Posterior cingulate gyrus (tissue), 11 donors: ENCODE measurements at regions of chr11 and their contacts with region 1.

Region 1: DNA sequence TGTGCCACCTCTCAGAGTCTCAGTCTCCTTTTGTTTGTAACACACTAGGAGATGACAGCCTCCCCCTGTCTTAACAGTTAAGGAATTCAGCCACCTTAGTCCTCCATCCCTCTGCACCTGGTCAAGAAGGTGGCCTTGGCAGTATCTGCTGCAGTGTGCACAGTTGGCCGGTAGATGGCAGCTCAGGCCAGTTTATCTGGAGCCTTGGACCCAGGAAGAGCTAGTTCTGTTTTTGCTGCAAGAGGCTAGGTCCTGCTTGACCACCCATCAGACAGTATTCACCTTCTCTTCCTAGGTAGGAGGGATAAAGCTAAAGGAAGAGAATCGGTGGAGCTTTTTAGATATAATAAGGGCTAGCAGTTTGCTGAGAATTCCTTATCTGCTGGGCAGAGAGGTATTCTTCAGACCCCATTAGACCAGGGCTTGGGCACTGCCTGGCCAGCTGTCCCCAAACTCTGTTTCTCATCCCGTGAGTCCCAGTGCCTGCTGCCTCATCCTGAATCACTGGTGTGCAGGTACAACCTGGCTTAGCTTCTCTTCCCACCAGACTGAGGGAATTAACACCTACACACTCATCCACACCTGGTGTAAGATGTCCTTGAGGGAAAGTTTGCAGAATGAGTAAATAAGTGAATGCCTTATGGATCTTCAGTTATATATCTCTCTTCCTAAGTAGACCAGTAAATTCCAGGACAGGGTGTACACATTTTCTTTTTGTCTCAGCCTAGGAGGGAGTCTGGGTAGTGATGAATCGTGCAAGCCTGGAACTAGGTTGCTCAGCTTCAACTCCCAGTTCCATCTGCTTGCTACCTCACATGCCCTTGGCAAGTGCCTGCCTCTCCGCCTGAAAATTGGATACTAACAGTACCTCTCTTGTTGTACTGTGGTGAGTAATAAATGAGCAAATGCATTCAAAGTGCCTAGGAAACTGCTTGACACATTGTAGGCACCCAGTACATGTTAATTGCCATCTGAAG is 70.8 kb upstream of the NARS2 start:
- DNase-seq: peak; percentile 61 to 97 (median 82)

Region 2: DNA sequence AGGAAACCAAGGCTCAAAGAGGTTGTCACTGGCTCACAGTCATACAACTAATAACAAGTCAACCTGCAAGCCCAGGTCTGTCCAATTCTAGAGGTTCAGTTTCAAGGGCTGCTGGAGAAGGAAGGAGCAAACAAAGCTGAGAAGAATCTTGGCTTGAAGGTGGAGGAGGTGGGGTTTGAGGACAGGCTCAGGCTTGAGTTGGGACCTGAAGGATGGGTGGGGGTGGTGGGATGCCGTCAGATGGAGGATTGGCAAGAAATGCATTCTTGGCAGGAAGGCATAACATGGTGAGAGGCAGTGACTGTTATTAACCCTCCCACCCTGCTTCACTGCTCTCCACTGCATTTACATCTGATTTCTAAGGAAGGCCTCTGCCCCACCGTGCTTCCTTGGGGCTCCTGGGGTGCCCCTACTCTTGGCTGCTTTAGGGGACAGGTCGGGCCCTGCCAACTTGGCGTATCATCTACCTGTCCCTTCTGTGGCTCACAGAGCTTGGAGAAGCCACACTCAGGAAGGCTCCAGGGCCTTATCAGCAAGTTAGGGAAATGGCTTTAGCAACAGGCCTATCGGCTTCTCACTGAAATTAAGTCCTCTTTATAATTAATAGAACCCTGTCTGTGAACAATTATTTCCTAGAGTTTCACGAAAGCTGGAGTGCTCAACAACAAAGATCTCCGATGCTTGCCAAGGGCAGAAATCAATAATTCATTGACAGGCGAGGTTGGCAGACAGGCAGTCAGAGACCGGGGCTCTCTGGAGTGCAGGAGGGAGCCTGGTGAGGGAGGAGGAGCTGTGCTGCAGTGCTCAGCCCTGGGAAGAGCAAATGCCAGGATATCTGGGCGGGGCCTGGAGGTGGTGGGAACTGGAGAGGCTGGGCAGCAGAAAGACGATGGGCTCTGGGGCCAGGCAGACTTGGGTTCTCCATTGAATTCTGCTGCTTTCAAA is 14.1 kb after region 1 on chr11:
- intact Hi-C with region 1: no loop called
- DNase-seq: peak in 1 of 10 donors; percentile 78

Region 3: DNA sequence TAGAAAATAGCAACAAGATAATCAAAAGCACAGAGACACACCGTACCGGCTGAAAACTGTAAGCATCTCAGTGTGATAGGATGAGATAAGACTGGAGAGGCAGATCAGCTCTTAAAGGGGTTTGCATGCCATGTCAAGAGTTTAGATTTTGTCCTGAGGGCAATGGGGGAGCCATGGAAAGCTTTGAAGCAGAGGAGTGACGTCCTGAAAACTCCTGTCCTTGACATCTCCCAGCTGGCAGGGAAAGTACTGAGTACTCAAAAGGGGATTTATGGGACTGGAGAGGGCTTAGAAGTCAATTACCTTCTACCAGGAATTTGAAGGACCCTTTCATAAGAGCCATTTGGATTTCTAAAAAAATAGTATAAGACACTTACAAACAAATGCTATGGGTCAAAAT is 349.7 kb after region 1 on chr11:
- intact Hi-C with region 1: no loop called
- DNase-seq: no peak

Region 4: DNA sequence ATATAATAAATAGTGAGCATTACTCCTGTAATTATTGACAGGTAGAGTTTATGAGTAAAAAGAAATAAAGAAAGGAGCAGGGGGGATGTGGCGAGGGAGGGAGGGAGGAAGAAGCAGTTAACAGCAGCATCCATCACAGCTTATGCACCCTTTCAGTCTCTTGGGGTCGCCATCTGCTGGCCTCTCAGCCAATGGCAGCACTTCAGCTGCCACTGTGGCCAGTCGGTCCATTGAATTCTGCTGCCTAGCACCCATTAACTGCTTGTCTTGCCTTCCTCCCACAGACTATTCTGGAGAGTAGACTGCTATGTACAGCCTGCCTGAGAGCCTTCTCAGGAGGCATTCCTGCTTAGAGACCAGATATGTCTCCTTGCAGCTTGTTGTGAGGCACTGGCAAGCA is 407.0 kb after region 1 on chr11:
- intact Hi-C with region 1: loop called (anchors 10 kb)
- DNase-seq: peak in 3 of 10 donors; percentile 23 to 40 (median 37)

Region 5: DNA sequence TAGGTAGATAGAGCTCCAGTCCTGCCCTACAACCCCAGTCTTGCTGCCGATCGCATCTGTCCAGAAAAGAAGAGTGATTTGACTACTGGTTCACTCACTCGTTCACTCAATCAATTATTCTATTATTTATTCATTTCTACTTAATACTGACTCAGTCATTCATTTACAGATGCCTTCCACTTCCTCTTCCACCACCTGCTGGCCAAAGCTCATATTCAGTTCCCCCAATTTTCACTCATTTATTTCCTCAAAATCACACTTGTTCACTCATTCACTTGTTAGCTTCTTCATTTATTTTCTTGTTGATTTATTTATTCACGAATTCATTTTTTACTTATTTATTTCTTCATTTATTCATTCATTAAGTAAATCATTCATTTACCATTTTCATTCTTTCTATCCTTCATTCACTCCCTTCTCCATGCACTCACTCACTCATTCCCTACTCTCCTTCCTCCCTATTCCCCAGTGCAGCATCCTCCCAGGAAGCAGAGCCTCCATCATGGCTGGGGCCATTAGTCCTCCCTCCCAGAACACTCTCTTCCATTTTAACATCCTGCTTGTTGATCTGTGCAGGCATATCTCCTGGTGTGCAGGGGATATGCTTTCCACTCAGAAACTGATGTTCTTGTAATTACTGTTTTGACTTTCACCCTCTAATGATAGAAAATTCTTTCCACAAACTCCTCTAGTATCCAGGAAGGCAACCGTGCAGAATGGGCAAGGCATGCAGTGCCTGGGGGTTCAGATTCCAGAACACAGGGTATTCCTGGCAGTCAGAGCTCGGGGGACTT is 514.3 kb after region 1 on chr11:
- intact Hi-C with region 1: loop called (anchors 5 kb)
- DNase-seq: no peak

Region 6: DNA sequence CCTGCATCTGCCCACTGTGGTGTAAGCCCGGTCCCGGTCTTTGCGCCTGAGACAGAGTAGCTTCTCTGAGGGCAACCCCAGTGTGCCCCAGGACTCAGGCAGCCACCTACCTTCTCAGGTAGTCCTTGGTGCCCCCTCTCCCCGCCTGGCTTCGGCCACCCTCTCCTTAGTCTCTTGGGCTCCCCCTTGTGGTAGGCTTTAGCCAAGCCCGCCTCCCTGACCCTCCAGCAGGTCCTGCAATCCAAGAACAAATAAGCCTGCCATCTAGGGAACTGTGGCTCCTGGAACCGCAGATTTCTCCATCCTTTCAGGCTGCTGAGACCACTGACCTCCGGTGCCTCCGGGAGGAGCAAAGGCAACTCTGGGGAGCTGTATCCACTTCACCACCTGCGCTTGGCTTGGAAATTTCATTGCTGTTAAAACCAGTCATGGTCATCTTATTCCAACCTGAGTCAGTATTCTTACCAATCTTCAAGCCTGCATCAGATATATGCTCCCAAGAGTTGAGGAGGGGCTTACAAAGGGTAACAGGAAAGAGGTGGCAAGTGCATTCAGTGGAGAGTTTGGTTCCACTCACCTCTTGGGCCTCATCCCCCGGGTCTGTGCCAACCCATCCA is 848.1 kb after region 1 on chr11:
- intact Hi-C with region 1: loop called (anchors 5 kb)
- DNase-seq: peak in 8 of 10 donors; percentile 44 to 94 (median 68)